ENCODE measurements at regions of chr3 and their contacts with region 1.

Region 1: GRCh38 chr3:141231101-141231935 is at the start of gene PXYLP1:
- DNase-seq: peak; percentile 93
- ATAC-seq: peak; percentile 94
- H3K4me3 Mint-ChIP-seq: peak within 1 kb of the TSS; percentile 87
- H3K27ac Mint-ChIP-seq: peak within 1 kb of the TSS; percentile 96
- H3K4me1 Mint-ChIP-seq: peaks cover 50% of the 10 kb centered on the region
- H3K27me3 Mint-ChIP-seq: no peaks in the 10 kb centered on the region
- total RNA-seq, gene PXYLP1: 15.0 to 16.5 TPM

Region 2: GRCh38 chr3:141000027-141000663 is 231.2 kb before region 1 on chr3:
- CTCF ChIA-PET with region 1: interaction called, 12 read pairs
- POLR2A ChIA-PET with region 1: interaction called, 3 read pairs
- DNase-seq: peak; percentile 69
- ATAC-seq: peak; percentile 92
- H3K4me3 Mint-ChIP-seq: no peak overlapping the region
- H3K27ac Mint-ChIP-seq: no peak overlapping the region
- H3K4me1 Mint-ChIP-seq: peaks cover 7% of the 10 kb centered on the region
- H3K27me3 Mint-ChIP-seq: peaks cover 9% of the 10 kb centered on the region

Region 3: GRCh38 chr3:141129541-141130011 is 101.7 kb before region 1 on chr3:
- CTCF ChIA-PET with region 1: no interaction called
- POLR2A ChIA-PET with region 1: no interaction called
- DNase-seq: no peak
- ATAC-seq: no peak
- H3K4me3 Mint-ChIP-seq: no peak overlapping the region
- H3K27ac Mint-ChIP-seq: no peak overlapping the region
- H3K4me1 Mint-ChIP-seq: no peaks in the 10 kb centered on the region
- H3K27me3 Mint-ChIP-seq: peaks cover 11% of the 10 kb centered on the region

Region 4: DNA sequence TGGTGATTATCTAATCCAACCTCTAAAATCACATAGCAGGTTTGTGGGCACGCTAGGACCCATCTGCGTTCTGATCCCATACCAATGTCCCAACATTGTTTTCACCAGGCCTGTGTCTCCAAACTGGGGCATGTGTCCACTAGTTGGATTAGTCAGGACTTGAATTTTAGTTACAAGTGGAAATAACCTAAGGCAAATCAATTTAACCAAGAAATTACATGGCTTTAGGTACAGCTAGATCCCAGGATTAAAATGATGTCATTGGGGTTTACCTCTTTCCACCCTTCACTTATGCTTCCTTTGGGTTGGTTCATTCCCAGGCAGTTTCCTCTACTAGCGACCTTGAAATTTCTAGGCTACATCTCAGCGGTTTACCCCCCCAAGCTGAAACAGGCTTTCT is 46.9 kb before region 1 on chr3:
- CTCF ChIA-PET with region 1: no interaction called
- POLR2A ChIA-PET with region 1: no interaction called
- DNase-seq: no peak
- ATAC-seq: no peak
- H3K4me3 Mint-ChIP-seq: no peak overlapping the region
- H3K27ac Mint-ChIP-seq: no peak overlapping the region
- H3K4me1 Mint-ChIP-seq: no peaks in the 10 kb centered on the region
- H3K27me3 Mint-ChIP-seq: peaks cover 5% of the 10 kb centered on the region

Region 5: GRCh38 chr3:141243271-141243707 is 12.0 kb after region 1 on chr3:
- CTCF ChIA-PET with region 1: interaction called, 337 read pairs
- POLR2A ChIA-PET with region 1: interaction called, 20 read pairs
- DNase-seq: peak; percentile 84
- ATAC-seq: peak; percentile 98
- H3K4me3 Mint-ChIP-seq: peak overlapping the region; percentile 54
- H3K27ac Mint-ChIP-seq: peak overlapping the region; percentile 78
- H3K4me1 Mint-ChIP-seq: peaks cover 51% of the 10 kb centered on the region
- H3K27me3 Mint-ChIP-seq: no peaks in the 10 kb centered on the region

Region 6: DNA sequence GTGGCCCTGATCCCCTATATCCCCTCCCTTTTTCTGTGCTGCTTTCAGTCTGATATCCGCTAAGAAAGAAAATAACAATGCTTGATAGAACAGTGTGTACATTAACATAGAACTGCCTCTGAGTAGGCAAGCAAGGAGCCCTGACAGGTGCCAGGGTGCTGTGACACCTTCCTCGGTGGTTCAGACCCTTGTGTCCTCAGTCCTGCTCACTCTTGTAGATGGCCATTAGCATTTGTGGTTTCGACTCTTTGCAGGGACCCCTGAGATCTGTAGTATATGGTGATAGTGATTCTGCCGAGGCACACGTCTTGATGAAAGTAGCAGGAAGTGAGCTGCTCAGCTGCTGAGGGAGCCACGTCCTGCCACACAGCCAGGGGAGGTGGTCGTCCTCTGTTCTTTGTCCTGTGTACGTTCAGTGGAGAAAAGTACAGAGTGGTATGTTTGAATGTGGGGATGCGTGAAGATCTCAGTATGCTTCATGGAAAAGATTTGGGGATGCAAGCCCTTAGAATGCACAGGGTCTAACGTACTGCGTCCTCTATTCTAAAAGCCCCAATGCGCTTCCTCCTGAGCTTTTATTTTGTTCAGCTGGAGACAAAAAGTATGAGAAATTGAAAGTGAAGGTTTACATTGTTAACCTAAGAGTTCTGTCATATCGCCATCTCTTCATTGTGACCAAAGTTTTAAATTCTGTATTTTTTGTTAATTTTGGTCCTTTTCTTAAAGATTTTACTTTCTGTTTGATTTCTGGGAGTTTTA is 35.7 kb after region 1 on chr3:
- CTCF ChIA-PET with region 1: interaction called, 86 read pairs
- POLR2A ChIA-PET with region 1: interaction called, 60 read pairs
- DNase-seq: peak; percentile 70
- ATAC-seq: peak; percentile 89
- H3K4me3 Mint-ChIP-seq: peak overlapping the region; percentile 75
- H3K27ac Mint-ChIP-seq: peak overlapping the region; percentile 95
- H3K4me1 Mint-ChIP-seq: peaks cover 51% of the 10 kb centered on the region
- H3K27me3 Mint-ChIP-seq: no peaks in the 10 kb centered on the region

Region 7: DNA sequence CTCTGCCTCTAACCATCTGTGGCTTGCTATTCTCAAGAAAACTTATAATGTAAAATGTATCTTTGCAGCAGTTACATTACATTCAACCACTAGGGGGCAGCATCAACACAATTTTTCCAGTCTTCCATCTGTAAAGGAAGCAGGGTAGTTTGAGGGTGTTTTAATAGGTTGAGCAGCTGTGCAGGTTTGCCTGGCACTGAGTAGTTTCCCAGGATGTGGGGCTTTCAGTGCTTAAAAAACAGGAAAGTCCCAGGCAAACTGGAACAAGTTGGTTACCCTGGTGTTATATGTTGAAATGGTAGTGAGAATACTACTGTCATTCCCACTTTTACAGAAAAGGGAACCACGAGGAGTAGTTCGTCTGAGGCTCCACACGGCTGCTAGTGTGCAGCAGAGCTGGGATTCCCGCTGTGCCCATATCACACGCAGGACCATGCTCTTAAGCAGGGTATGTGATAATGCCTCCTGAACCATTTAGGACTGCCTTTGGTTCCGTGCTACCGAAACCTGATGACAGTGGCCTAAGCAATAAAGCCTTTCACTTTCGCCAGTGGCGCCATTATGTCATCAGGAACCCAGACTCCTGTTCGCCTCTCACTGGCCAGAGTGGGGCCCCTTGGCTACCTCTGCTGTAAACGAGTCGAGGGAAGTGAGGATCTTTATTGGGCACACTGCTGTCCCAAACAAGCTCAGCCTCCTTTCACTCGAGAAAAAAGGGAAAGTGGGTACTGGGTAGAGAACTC is 72.3 kb after region 1 on chr3:
- CTCF ChIA-PET with region 1: interaction called, 82 read pairs
- POLR2A ChIA-PET with region 1: interaction called, 5 read pairs
- DNase-seq: peak; percentile 83
- ATAC-seq: peak; percentile 74
- H3K4me3 Mint-ChIP-seq: no peak overlapping the region
- H3K27ac Mint-ChIP-seq: no peak overlapping the region
- H3K4me1 Mint-ChIP-seq: peaks cover 53% of the 10 kb centered on the region
- H3K27me3 Mint-ChIP-seq: peaks cover 2% of the 10 kb centered on the region